ENCODE measurements at regions of chr17 and their contacts with region 1.

Region 1: DNA sequence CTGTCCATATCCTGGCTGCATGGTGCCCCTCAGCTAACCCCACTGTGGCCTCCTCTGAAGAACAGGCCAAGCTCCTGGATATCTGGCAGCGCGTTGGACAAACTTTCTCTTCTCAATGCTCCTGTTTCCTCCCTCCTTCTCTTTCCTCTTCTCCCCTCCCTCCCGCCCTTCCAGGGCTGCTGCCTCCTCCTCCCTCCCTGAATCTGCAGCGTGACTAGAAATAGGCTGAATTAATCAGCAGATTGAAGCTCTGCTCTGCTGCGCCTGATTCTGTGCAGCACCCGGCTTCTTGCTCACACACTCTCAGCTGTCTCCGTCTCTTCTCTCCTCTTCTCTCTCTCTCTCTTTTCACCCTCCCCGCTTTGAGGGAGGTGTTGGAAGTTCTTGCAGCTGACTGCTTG is 19.8 kb downstream of the TMEM94 start:
- DNase-seq: no peak
- H3K4me3 ChIP-seq: no peak overlapping the region
- H3K27ac ChIP-seq: peak overlapping the region; percentile 11 to 72 (median 60)
- H3K4me1 ChIP-seq: peaks cover 9 to 60% (median 27%) of the 10 kb centered on the region in 3 donors
- H3K27me3 ChIP-seq: no peaks in the 10 kb centered on the region
- CTCF ChIP-seq: no peak
- POLR2A ChIP-seq: no peak

Region 2: DNA sequence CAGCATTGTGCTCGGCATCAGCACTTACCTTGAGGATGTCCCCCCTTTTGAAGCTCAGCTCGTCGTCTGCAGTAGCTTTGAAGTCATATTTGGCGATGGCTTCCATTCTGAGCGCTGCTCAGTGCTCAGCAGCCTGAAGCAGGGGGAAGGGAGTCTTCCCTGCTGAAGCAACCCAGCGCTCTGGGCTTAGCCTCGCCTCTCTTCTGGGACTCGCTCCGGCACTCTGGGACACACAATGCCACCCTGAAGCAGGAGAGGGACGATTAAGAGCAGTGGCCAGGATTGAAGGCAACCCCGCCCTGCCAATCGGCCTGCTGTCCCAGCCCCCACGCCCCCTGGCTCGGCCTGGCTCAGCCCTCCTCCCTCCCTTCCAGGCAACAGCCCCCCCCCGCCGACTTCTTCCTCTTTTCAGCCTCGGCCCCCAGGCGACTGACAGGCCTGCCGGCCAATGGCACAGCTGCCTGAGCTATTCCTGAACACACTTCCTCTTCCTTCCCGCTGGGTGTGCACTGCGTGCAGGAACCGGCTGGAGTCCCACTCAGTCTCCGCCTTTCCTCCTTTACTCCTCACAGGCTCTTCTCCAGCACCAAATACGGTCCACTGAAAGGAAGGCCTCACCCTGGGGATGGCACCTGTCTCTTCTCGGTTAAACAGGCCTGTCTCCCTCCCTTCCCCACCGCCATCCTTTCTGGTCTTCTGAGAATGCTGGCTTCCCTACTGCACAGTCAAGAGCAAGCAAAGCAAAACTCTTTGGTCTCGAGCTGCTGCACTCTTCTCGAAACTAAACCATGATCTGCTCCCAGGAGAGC is 82.5 kb before region 1 on chr17:
- intact Hi-C with region 1: no loop called
- DNase-seq: peak; percentile 95
- H3K4me3 ChIP-seq: peak overlapping the region; percentile 37 to 68 (median 61)
- H3K27ac ChIP-seq: peak overlapping the region; percentile 77 to 89 (median 88)
- H3K4me1 ChIP-seq: peaks cover 37 to 93% (median 46%) of the 10 kb centered on the region in 3 donors
- H3K27me3 ChIP-seq: no peaks in the 10 kb centered on the region
- CTCF ChIP-seq: peak in 3 of 6 experiments; percentile 26 to 32 (median 29)
- POLR2A ChIP-seq: peak in 2 of 4 donors; percentile 8 to 58

Region 3: DNA sequence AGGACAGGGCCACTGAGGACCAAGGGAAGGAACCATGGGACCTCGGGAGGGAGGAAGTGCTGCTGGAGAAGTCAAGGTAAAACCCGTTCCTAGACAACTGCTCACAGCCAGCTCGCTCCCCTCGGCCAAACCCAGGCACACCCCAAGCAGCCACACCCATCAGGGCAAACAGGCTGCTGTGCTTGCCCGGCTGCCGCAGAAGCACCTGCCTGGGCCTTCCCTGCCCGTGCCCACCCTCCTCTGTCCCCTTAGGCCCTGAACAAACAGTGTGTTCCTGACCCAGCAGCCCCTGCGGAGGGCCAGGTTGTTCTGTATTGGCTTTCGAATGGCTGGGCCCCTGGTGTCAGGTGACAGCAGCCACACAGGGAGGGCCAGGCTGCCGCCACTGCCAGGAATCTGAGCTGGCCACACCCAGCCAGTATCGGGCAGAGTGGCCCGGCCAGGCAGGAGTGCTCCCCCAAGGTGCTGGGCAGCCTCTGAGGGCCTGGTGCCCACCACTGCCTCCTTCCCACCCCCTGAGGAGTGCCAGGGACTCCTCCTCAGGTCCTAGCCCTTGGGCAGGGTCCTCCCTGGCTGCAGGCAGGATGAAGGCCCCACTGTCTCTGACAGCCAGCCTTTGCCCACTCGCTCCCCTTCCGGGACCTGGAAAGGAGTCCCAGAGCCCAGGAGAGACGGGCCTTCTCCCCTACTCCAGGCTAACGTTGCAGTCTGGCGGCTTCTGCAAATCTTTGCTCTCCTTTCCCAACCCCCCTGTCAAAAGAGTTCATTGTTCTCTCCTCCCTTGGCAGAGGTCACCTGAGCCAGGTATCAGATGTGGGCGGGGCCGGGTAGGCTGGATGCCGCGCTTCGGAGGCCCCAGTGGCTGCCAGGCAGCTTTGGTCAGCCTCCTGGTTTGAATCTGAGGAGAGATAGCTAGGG is 73.2 kb after region 1 on chr17:
- intact Hi-C with region 1: loop called (anchors 10 kb)
- DNase-seq: no peak
- H3K4me3 ChIP-seq: peak overlapping the region in 3 of 4 donors; percentile 4 to 44 (median 9)
- H3K27ac ChIP-seq: peak overlapping the region; percentile 92 to 96 (median 95)
- H3K4me1 ChIP-seq: peaks cover 8 to 54% (median 13%) of the 10 kb centered on the region in 3 donors
- H3K27me3 ChIP-seq: no peaks in the 10 kb centered on the region
- CTCF ChIP-seq: peak in 1 of 6 experiments; percentile 7
- POLR2A ChIP-seq: peak in 1 of 4 donors; percentile 53

Region 4: DNA sequence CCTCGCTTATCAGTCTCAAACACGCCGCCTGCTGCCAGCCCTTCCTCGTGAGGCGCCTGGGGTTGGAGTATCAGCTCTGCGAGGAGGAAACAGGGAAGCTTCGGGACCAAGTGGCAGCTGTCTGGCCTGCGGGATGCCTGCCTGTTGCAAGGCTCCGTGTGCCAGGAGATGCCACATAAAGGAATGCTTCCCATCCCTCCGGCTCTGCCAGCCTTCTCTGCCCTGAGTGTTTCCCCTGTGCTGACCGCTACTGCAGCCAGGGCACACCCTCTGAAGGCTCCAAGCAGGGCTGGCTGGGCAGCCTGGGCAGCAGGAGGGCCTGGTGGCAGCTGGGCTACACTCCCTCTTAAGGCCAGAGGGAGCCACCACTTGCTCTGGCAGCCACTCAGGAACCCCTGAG is 159.5 kb after region 1 on chr17:
- intact Hi-C with region 1: no loop called
- DNase-seq: no peak
- H3K4me3 ChIP-seq: no peak overlapping the region
- H3K27ac ChIP-seq: no peak overlapping the region
- H3K4me1 ChIP-seq: peaks cover 20 to 62% (median 20%) of the 10 kb centered on the region in 3 donors
- H3K27me3 ChIP-seq: no peaks in the 10 kb centered on the region
- CTCF ChIP-seq: no peak
- POLR2A ChIP-seq: no peak